Ascending aorta (tissue), 2 donors: ENCODE measurements at regions of chr9 and their contacts with region 1.

Region 1: DNA sequence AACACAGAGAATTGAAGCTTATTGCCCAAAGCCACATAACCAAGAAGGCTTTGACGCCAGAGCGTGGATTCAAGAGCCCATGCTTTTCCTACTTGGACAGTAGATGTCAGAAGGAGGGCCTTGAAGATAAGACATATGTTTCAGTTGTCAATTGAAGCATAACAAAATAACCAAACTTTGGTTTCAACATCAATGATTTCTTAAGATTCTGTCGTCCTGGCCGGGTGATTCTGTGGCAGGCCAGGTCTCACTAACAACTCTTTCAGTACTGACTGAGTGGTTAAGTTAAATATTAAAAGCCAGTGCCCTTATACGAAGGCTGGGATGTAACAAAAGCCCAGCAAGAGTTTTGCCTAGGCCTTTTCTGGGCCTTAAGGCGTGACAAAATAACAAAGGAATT is 94.0 kb downstream of the RCL1 start:
- DNase-seq: no peak
- H3K4me3 ChIP-seq: no peak overlapping the region
- H3K27ac ChIP-seq: peak overlapping the region; percentile 81
- H3K4me1 ChIP-seq: peaks cover 0 to 29% of the 10 kb centered on the region in 2 donors
- H3K27me3 ChIP-seq: no peaks in the 10 kb centered on the region
- CTCF ChIP-seq: no peak

Region 2: DNA sequence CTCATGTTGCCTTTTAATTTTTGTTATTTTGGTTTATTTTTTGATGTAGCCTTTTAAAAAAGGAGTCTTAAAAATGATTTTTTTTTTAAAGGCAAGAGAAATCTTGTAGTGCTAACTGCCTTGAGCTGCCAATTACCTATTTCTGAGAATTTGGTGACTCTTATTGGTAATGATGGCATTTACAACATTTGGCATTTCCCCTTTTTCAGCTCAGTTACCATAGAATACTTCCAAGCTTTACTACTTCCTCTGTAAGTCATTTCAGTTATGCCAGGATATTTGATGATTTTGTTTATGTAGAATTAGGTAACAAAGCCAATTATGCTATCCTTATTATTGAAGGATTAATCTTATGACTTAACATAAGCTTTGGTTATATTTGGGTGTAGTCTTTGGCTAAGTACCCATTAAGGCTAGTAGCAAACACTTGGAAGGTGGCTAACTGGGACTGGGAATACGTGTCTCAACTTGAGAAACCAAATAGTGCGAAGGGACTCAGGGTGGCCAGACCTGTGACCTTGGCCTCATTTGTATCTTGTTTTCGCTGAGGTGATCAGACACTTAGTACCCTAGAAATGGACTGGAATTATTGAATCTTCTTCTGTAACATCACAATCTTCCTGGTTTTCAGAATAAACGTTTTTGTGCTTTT is 179.6 kb before region 1 on chr9:
- intact Hi-C with region 1: no loop called
- DNase-seq: no peak
- H3K4me3 ChIP-seq: no peak overlapping the region
- H3K27ac ChIP-seq: peak overlapping the region in 1 of 2 donors; percentile 28
- H3K4me1 ChIP-seq: no peaks in the 10 kb centered on the region
- H3K27me3 ChIP-seq: no peaks in the 10 kb centered on the region
- CTCF ChIP-seq: no peak

Region 3: GRCh38 chr9:4873066-4873465 is 13.6 kb before region 1 on chr9:
- intact Hi-C with region 1: loop called (anchors 1 kb)
- DNase-seq: peak; percentile 16 to 87
- H3K4me3 ChIP-seq: no peak overlapping the region
- H3K27ac ChIP-seq: peak overlapping the region; percentile 71 to 86
- H3K4me1 ChIP-seq: peaks cover 3 to 19% of the 10 kb centered on the region in 2 donors
- H3K27me3 ChIP-seq: no peaks in the 10 kb centered on the region
- CTCF ChIP-seq: no peak

Region 4: DNA sequence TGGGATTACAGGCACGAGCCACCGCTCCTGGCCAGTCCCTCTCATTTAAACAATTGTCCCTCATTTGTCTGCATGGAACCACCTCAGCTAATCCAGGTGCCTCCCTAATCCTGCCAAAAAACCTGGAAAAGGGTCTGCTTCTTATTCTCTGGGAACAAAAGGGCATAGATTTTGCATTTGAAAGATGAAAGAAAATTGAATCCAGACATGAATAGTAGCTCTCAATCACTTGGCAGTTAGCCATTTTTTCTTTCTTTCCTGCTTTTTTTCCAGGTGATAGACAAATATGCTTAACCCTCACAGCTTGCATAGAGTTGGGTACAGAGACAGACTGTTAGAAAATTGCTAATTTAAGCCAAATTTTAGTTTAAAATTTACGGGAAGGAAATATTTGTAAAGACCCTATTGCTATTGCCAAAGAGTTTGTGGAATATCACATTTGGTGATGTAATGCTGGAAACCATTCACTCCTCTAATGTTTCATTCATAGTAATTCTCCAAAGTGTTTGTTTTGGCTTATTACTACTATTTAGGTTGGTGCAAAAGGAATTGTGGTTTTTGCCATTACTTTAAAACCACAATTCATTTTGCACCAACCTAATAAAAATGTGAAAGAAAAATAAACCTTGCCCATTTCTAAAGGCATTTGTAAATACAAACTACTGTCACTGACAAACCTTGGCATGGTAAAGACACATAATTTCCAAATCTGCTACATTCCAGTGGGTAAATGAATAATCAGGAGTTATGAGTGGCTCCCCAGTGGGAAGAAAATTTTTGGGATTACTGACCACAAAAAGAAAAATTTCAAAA is 17.8 kb after region 1 on chr9:
- intact Hi-C with region 1: no loop called
- DNase-seq: no peak
- H3K4me3 ChIP-seq: no peak overlapping the region
- H3K27ac ChIP-seq: peak overlapping the region; percentile 31 to 41
- H3K4me1 ChIP-seq: peaks cover 4 to 13% of the 10 kb centered on the region in 2 donors
- H3K27me3 ChIP-seq: no peaks in the 10 kb centered on the region
- CTCF ChIP-seq: no peak

Region 5: DNA sequence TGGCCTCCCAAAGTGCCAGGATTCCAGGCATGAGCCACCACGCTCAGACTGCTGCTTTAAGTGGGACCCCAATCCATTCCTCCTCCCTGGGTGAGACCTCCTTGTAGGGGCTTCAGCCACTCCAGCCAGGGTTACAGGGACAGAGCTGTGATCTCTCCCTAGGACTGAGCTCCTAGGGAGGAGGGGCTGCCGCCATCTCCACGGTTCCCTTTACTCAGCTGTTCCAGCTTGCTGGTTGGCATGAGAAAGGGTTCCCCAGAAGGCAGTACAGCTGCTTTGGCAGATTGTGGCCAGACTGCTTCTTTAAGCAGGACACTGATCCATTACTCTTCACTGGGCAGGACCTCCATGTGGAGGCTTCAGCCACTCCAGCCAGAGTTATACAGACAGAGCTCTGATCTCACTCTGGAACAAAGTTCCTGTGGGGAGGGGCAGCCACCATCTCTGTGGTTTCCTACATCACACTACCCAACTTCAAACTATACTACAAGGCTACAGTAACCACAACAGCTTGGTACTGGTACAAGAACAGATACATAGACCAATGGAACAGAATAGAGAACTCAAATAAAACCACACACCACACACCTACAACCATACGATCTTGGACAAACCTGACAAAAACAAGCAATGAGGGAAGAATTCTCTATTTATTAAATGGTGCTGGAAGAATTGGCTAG is 291.6 kb after region 1 on chr9:
- intact Hi-C with region 1: no loop called
- DNase-seq: no peak
- H3K4me3 ChIP-seq: no peak overlapping the region
- H3K27ac ChIP-seq: no peak overlapping the region
- H3K4me1 ChIP-seq: no peaks in the 10 kb centered on the region
- H3K27me3 ChIP-seq: no peaks in the 10 kb centered on the region
- CTCF ChIP-seq: no peak